Motor neuron (in vitro differentiated cells): ENCODE measurements at regions of chr2 and their contacts with region 1.

Region 1: DNA sequence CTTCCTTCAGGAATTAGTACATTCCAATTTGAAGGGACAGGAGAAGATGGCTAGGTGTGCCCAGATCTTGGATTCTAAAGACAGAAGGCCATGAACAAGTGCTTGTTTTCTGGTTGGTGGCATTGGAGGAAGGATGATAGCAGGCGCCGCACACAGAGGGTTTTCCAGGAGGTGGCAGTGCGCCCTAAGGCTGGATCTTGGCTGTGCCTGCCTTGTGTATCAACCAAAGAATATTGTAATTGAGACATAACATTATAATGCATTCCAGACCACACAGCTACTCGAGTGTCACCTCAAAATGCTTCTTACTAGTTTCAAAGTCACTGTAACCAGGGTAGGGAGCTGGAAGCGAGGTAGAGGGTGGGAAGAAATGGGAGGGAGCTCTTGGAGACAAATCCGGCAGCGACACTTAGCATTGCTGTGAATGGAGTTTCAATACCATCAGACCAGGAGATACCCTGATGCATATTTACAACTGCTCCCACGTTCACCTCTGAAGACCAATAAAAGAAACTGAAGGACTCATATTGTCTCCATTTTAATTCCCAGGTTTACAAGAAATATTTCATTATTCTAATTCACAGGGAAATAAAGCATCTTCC is 42.5 kb downstream of the CPO start:
- ATAC-seq: peak; percentile 94 to 100 (median 96)
- H3K4me3 ChIP-seq: no peak overlapping the region
- H3K27ac ChIP-seq: no peak overlapping the region
- H3K4me1 ChIP-seq: peaks cover 26 to 28% of the 10 kb centered on the region in 2 donors

Region 2: DNA sequence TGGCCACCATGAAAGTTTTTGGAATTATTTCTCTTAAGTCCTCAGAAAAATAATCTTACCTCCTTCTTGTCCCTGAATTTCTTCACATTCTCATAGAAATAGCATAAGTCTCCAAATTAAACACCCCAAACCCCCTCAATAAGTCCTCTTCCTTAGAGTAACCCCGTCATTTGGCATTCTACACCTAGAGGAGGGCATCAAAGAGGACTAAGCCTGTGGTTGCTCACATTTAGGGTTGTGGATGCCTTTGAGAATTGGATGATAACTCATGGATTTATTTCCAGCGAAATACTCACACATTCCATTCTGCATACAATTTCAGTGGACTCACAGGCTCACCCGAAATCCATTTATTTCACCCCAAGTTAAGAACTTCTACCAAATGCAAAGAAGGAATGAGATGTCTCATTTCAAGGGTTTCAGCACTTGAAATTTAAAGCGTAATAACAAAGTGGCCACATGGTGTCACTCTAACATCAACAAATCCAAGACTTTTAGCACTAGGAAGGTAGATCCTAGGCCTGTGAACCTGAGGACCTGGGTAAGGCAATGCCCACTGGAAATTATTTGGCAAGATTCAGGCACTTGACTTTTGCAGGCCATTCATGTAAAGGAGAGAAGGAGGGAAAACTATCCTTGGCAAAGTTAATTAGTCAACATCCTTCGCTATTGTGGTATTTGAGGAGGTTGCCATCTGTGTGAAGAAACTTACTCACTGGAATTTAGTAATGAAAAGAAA is 288.3 kb before region 1 on chr2:
- in situ Hi-C with region 1: loop called in 1 of 9 experiments (anchors 25 kb)
- ATAC-seq: peak in 7 of 8 experiments; percentile 42 to 85 (median 62)
- H3K4me3 ChIP-seq: no peak overlapping the region
- H3K27ac ChIP-seq: no peak overlapping the region
- H3K4me1 ChIP-seq: no peaks in the 10 kb centered on the region

Region 3: DNA sequence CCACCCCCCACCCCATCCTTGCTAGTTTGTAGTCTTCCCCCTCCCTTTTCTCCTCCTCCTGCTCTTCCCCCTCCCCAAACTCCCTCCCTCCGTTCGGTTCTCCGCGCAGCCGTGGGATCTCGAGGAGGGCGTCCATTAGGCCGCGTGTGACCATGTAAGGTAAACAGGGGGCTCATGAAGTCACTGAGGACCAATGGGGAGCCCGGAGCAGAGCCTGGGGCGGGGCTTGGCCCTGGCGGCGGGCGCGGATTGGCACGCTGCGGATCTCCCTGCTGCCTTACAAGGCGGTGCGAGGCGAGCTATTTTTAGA is 184.2 kb after region 1 on chr2:
- in situ Hi-C with region 1: loop called in 3 of 9 experiments (anchors 25 kb)
- ATAC-seq: peak; percentile 88 to 93 (median 90)
- H3K4me3 ChIP-seq: peak overlapping the region; percentile 60 to 84 (median 71)
- H3K27ac ChIP-seq: peak overlapping the region; percentile 100
- H3K4me1 ChIP-seq: peaks cover 17 to 19% of the 10 kb centered on the region in 2 donors